Head of caudate nucleus (tissue), 42 donors: ENCODE measurements at regions of chr11 and their contacts with region 1.

Region 1: DNA sequence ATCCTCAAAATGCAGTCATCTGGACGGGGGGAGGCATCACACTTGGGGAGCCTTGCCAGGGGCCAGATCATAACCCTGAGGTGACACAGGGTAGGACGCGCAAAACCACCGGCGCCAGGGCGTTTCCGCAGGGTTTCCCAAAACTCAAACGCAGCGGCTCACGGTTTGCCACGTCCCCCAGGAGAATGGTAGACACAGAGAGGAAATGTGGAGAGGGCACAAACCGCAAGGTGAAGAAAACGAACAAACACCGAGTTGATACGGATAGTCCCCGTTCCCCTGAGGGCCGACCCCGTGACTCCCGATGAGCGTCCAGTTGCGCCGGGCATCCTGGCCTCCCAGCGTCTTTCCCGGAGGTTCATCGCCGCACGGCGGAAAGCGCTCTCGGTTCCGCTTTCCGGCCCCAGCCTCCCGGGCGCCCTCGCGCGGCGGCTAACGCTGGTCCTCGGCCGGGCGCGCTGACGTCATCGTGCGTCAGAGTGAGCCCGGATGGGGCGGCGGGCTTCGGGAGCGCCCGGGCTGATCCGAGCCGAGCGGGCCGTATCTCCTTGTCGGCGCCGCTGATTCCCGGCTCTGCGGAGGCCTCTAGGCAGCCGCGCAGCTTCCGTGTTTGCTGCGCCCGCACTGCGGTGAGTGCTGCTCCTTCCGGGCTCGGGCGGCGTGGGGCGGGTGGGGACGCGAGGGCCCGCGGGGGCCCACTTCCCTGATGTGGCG is at the start of gene BIRC2:
- DNase-seq: peak; percentile 79 to 99 (median 96)

Region 2: GRCh38 chr11:101914738-101915426 is 432.0 kb before region 1 on chr11 and contains the start of gene CEP126:
- intact Hi-C with region 1: no loop called
- DNase-seq: peak; percentile 91 to 98 (median 96)

Region 3: DNA sequence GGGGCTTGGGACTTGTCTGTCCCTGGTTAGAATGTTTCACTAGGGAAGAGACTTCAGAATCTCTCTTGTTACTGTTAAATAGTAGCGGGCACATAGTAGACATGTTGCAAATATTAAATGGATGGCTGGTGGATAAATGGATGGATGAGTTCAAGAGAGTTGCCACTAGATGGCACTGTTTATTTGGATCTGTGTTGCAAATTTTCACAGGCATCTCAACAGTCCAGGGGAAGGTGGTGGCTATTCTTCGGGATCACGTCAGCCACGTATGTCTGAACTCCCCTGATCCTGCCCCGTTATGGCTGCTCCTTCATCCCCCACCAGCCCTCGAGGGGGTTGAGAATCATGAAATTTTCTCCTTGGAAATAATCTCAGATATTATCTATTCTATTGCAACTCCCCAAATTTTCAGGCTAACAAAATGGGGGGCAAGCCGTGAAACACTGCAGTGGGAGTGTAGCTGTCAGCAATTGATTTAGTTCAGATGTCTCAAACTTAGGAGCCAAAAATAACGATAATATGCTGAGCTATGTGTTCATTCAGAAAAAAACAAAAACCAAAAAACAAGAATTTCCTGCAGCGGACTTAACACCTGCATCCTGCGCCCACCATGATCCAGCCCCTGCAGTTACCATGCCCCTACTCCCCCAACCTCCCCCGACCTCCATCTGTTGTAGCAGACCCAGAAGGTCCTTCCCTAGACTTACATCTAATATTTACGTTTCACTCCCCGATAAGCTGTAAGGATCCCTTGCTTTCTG is 58.8 kb before region 1 on chr11:
- intact Hi-C with region 1: loop called (anchors 10 kb)
- DNase-seq: peak in 23 of 42 donors; percentile 15 to 76 (median 41)

Region 4: DNA sequence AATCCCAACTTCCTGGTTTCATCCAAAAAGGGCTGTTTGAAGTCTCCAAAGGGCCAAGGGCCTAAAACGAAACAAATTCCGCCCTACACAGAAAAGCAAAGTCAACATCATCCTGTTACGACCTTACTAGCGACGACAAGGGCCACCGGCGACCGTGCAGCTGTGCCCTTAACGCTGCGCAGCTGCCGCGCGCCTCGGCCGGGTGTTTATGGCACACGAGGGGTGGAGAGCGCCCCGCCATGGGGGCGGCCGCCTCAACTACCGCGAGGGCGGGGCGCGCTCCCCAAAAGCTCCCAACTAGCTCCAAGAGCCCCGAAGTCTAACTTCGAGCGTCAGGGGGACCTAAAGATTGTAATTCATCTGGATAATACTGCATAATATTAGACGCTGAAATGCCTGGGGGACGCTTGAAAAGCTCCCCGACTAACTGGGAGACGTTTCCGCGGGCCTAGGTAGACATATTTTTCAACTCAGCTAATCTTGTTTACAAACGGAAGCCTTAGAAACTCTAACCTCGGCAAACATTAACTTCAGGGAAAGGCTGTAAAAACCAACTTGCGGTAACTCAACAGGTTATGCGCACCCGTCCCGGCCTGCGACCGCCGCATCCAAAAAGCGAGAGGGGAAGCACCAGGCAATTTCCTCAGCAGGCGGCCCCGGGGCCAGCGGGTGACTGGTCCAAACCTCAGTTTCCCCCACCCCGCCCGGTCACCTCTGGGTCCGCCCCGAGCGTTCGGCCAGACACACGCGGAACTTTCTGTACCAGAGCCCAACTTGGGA is 105.0 kb after region 1 on chr11:
- intact Hi-C with region 1: loop called (anchors 2 kb)
- DNase-seq: peak; percentile 56 to 89 (median 78)

Region 5: DNA sequence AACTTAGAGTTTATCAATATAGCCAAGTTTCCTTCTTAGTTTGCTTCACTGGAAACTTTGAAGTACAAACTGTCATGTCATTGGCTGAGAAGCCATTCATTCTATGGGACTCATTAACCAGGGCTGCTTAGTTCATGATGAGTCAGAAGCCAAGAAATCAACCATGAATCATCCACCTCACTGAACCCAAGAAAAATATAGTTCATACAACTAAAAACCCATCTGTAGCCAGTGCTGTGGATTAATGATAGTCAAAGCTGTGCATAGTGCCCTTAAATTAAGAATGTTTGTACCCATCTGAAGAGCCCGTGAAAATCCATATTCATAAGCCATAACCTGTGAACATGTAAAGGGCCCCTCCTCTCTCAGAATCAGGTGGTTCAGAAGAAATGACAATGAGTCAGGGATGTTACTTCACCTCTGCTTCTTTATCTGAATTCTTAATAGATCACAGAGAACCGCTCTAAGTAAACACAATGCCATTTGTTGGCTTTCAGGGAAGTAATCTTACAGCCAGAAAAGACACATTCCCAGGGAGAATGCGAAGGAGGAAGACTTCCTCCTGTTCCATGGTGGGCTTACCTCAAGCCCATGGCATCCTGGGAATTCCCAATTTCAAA is 252.8 kb after region 1 on chr11:
- intact Hi-C with region 1: loop called (anchors 10 kb)
- DNase-seq: peak in 5 of 42 donors; percentile 14 to 63 (median 30)